ENCODE measurements at regions of chr2 and their contacts with region 1.

Region 1: GRCh38 chr2:230614913-230615332 is 97.7 kb upstream of the CAB39 start:
- DNase-seq: no peak
- H3K4me3 ChIP-seq: no peak overlapping the region
- H3K27ac ChIP-seq: no peak overlapping the region
- H3K4me1 ChIP-seq: no peaks in the 10 kb centered on the region
- H3K27me3 ChIP-seq: no peaks in the 10 kb centered on the region
- CTCF ChIP-seq: no peak

Region 2: GRCh38 chr2:230007931-230008707 is 606.8 kb before region 1 on chr2:
- intact Hi-C with region 1: loop called (anchors 10 kb)
- DNase-seq: peak; percentile 52 to 80 (median 64)
- H3K4me3 ChIP-seq: no peak overlapping the region
- H3K27ac ChIP-seq: no peak overlapping the region
- H3K4me1 ChIP-seq: no peaks in the 10 kb centered on the region
- H3K27me3 ChIP-seq: no peaks in the 10 kb centered on the region
- CTCF ChIP-seq: peak; percentile 69